ENCODE measurements at regions of chr18 and their contacts with region 1.

Region 1: GRCh38 chr18:77054606-77055428 is 77.8 kb downstream of the MBP start:
- DNase-seq: peak; percentile 93
- ATAC-seq: peak; percentile 82

Region 2: DNA sequence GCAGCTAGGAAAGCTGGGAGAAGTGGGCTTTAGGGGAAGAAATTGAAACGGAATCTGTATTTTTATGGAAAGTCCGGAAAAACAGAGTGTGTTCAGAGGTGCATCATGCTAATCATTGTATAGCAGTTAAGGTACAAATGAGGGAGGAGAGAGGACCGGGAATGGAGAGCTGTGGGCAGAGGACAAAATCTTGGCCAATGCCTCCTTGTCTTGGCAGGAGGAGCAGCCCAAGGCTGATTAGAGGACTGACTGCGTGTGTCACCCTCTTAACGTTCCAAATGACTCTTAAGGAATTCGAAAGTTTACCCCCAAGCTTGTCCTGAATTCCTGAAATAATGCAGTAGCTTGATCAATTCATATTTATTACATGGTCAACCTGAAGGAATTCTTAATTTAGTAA is 151.4 kb before region 1 on chr18:
- intact Hi-C with region 1: no loop called
- DNase-seq: no peak
- ATAC-seq: peak; percentile 81

Region 3: GRCh38 chr18:77000527-77000926 is 54.3 kb before region 1 on chr18:
- intact Hi-C with region 1: loop called (anchors 5 kb)
- DNase-seq: peak; percentile 76
- ATAC-seq: peak; percentile 44

Measured in left ventricle myocardium superior (tissue), 1 donor.